Ascending aorta (tissue), 2 donors: ENCODE measurements at regions of chr2 and their contacts with region 1.

Region 1: DNA sequence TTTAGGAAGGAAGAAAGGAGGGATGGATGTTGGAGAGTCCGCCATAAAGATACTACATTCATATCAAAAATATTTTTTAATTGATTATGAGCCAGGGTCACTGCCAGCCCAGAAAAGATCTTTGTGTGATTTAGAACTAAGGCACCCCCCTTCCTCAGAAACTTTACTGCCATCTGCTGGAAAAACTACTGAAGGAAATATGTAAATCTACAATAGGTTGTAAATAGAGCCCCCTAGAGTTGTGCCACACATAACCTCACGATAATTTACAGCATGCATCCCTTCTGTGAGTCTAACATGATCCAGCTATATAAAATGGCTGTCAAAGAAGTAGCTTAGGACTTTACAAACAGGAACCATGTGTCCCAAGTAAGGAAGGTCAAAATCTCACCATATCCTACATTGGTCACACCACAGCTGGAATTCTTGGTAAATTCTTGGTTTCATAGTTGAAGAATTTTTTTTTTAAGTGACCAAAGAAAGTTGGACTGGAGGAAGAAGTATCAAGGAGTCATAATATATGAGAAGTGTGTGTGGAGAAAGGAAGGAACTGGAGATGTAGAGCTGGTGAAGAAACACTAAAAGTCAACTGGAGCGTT is 152.5 kb downstream of the CYP26B1 start:
- DNase-seq: no peak
- H3K4me3 ChIP-seq: no peak overlapping the region
- H3K27ac ChIP-seq: no peak overlapping the region
- H3K4me1 ChIP-seq: no peaks in the 10 kb centered on the region
- H3K27me3 ChIP-seq: no peaks in the 10 kb centered on the region
- CTCF ChIP-seq: peak in 2 of 3 experiments; percentile 31 to 57

Region 2: DNA sequence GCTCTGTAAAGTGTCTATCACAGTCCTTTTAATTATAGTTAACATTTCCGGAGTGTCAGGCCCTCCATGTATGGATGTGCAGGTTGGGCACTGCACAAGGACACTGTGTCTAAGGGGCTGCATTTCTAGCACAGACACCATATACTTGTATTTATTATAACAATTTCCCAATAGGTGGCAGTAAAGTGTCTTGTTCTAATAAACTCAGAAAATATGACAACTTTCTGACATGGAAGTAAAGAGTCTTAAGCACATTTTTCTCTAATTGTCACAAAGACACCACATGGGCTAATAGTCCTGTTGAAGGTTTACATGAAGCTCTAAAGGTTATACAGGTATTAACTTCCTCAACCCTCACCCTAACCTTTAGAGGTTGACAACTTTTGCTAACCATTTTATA is 385.2 kb before region 1 on chr2:
- intact Hi-C with region 1: loop called (anchors 2 kb)
- DNase-seq: no peak
- H3K4me3 ChIP-seq: no peak overlapping the region
- H3K27ac ChIP-seq: no peak overlapping the region
- H3K4me1 ChIP-seq: peaks cover 0 to 12% of the 10 kb centered on the region in 2 donors
- H3K27me3 ChIP-seq: no peaks in the 10 kb centered on the region
- CTCF ChIP-seq: peak in 2 of 3 experiments; percentile 32 to 53

Region 3: GRCh38 chr2:71923887-71924533 is 71.2 kb before region 1 on chr2:
- intact Hi-C with region 1: loop called (anchors 10 kb)
- DNase-seq: no peak
- H3K4me3 ChIP-seq: no peak overlapping the region
- H3K27ac ChIP-seq: no peak overlapping the region
- H3K4me1 ChIP-seq: no peaks in the 10 kb centered on the region
- H3K27me3 ChIP-seq: no peaks in the 10 kb centered on the region
- CTCF ChIP-seq: peak; percentile 58 to 85 (median 78)

Region 4: DNA sequence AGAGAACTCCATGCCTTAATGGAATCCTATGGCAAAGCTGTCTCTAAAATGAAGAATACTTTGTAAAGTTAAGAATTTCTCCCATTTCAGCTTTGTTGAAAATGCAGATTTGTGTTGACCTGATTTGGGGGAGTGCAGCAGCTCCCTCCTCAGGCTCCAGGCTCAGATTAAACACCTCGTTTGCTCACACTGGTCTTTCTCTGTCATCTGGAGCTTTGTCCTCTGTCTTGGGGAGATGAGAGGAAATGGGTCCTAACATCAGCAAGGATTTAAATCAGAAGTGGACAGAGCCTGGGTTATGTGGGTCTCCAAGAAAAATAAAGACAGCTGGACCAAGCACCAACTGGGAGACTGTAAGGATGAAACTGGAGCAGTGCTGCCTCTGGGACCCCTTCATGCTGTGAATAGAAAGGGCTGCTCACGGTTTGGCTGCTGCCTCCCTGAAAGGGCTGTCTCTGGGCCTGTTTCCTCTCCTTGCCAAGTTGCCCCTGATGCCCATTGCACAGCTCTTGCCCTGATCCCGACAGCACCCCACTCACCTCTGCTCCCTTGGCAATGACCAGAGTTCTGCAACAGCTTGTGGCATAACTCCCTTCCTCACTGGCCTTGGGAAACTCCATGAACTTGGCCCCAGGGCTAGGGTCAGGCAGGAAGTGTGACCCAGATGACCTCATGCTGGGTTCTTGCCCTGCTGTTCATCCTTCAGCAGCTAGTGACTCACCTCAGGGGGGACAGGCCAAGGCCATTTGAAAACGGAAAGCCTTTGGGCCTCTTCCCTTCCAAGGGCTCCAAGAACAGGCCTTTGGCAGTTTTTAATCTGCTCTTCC is 44.7 kb before region 1 on chr2:
- intact Hi-C with region 1: no loop called
- DNase-seq: peak in 1 of 2 donors; percentile 84
- H3K4me3 ChIP-seq: no peak overlapping the region
- H3K27ac ChIP-seq: peak overlapping the region in 1 of 2 donors; percentile 30
- H3K4me1 ChIP-seq: no peaks in the 10 kb centered on the region
- H3K27me3 ChIP-seq: no peaks in the 10 kb centered on the region
- CTCF ChIP-seq: peak in 1 of 3 experiments; percentile 9